GM13977 (cell line): ENCODE measurements at regions of chr12 and their contacts with region 1.

Region 1: DNA sequence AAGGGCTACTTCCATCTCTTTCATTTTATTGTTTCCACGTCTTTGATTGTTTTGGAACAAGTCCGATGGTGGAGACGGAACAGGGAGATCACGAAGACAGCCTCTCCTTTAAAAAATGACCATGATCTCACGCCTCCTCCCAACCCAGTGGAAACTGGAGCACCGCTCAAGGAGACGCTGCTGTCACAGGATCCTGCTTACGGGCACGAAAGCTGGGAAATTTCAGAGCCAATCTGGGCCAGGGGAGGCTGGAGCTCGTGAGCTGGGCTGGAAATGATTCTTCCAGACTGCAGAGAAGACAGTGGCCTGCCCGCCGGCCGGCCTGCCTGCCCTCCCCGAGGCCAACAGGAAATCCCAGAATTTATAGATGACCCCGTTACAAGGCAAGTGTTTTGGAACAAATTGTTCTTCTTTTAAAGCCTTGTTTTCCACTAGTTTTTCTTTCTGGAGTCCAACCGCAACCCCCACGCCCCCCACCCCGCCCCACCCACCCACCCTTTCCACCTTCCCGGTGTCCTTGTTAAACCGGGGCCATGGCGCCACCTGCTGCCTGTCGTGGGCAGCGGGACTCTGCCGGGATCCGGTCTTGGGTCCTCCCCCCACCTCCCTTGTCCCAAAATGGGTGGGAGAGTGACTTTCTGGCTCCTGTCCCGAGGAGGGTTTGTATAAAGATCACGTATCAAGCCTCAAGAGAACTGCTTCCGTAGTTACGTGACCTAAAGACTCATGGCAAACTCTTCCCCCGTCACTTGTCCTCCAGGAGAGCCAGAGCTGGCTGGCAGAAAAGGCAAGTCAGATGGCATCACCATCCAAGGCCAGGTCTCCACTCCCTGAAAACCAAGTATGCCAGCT is 40.3 kb downstream of the MAP1LC3B2 start:
- DNase-seq: peak; percentile 65
- CTCF ChIP-seq: peak; percentile 72

Region 2: GRCh38 chr12:115998119-115998633 is 601.3 kb before region 1 on chr12:
- in situ Hi-C with region 1: loop called (anchors 25 kb)
- DNase-seq: peak; percentile 25
- CTCF ChIP-seq: peak; percentile 54